Activated CD4-positive, alpha-beta memory T cell treated with anti-CD3 and anti-CD28 coated beads for 36 hours (primary cell): ENCODE measurements at regions of chr9 and their contacts with region 1.

Region 1: GRCh38 chr9:105414947-105415661 is 32.7 kb upstream of the FSD1L start:
- DNase-seq: peak; percentile 53
- H3K4me3 Mint-ChIP-seq: no peak overlapping the region
- H3K27ac Mint-ChIP-seq: no peak overlapping the region
- H3K4me1 Mint-ChIP-seq: peaks cover 4% of the 10 kb centered on the region
- H3K27me3 Mint-ChIP-seq: peaks cover 37% of the 10 kb centered on the region

Region 2: GRCh38 chr9:104780799-104781395 is 634.2 kb before region 1 on chr9:
- CTCF ChIA-PET with region 1: interaction called, 3 read pairs
- POLR2A ChIA-PET with region 1: no interaction called
- intact Hi-C with region 1: loop called (anchors 2 kb)
- DNase-seq: no peak
- H3K4me3 Mint-ChIP-seq: no peak overlapping the region
- H3K27ac Mint-ChIP-seq: no peak overlapping the region
- H3K4me1 Mint-ChIP-seq: no peaks in the 10 kb centered on the region
- H3K27me3 Mint-ChIP-seq: peaks cover 1% of the 10 kb centered on the region

Region 3: GRCh38 chr9:104863180-104863883 is 551.8 kb before region 1 on chr9:
- CTCF ChIA-PET with region 1: interaction called, 22 read pairs
- POLR2A ChIA-PET with region 1: no interaction called
- intact Hi-C with region 1: loop called (anchors 1 kb)
- DNase-seq: peak; percentile 57
- H3K4me3 Mint-ChIP-seq: no peak overlapping the region
- H3K27ac Mint-ChIP-seq: no peak overlapping the region
- H3K4me1 Mint-ChIP-seq: peaks cover 3% of the 10 kb centered on the region
- H3K27me3 Mint-ChIP-seq: no peaks in the 10 kb centered on the region

Region 4: GRCh38 chr9:105438141-105438806 is 23.2 kb after region 1 on chr9:
- CTCF ChIA-PET with region 1: no interaction called
- POLR2A ChIA-PET with region 1: no interaction called
- intact Hi-C with region 1: no loop called
- DNase-seq: no peak
- H3K4me3 Mint-ChIP-seq: no peak overlapping the region
- H3K27ac Mint-ChIP-seq: no peak overlapping the region
- H3K4me1 Mint-ChIP-seq: no peaks in the 10 kb centered on the region
- H3K27me3 Mint-ChIP-seq: no peaks in the 10 kb centered on the region

Region 5: GRCh38 chr9:105708405-105708804 is 293.3 kb after region 1 on chr9:
- CTCF ChIA-PET with region 1: no interaction called
- POLR2A ChIA-PET with region 1: no interaction called
- intact Hi-C with region 1: no loop called
- DNase-seq: no peak
- H3K4me3 Mint-ChIP-seq: no peak overlapping the region
- H3K27ac Mint-ChIP-seq: no peak overlapping the region
- H3K4me1 Mint-ChIP-seq: peaks cover 8% of the 10 kb centered on the region
- H3K27me3 Mint-ChIP-seq: no peaks in the 10 kb centered on the region